ENCODE measurements at regions of chr12 and their contacts with region 1.

Region 1: DNA sequence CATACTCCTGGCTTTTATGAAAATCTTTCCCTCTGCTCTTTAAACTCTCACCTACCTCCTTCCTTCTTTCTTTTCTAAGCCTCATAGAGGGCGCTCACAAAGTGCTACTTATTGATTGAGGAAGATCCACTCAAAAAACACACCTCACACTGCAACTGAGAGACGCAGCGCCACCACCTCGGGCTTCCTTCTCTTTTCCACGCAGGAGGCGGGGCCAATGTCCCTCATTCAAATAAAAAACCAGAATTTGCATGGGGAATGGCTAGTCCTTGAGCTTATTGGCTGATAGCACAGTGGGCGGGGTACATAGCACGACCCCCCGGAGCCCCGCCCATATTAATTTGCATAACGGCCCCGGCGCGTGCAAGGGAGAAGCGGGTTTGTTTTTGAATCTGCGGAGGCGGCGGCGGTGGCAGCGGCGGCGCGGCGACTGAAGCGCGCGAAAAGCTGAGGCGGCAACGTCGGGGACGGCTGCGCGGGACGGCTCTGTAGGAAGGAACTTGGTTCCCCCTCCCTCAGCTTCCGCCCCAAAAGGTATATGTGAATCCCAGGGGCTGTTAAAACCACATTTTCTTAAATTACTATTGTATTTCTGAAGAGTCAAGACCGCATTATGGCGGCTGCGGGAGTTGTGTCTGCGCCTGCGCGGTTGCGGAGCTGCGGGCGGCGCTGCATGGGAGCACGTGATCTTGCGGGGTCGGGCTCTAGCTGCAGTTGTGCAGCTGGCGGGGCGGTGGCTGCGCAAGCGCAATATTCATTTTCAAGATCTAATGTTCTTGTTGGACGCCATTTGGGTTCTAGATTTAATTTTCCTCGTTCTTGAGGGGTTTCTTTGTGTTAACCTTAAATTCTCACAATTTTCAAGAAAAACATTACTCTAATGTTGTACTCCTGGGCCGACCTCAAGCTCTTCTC is at the start of gene ATF7IP:
- DNase-seq: peak; percentile 97
- ATAC-seq: peak; percentile 88
- H3K4me3 Mint-ChIP-seq: peak within 1 kb of the TSS; percentile 85
- H3K27ac Mint-ChIP-seq: peak within 1 kb of the TSS; percentile 97
- H3K4me1 Mint-ChIP-seq: peaks cover 19% of the 10 kb centered on the region
- H3K27me3 Mint-ChIP-seq: no peaks in the 10 kb centered on the region
- total RNA-seq, gene ATF7IP: 149 to 172 TPM

Region 2: GRCh38 chr12:14066051-14066450 is 299.5 kb before region 1 on chr12:
- POLR2A ChIA-PET with region 1: no interaction called
- DNase-seq: no peak
- ATAC-seq: no peak
- H3K4me3 Mint-ChIP-seq: no peak overlapping the region
- H3K27ac Mint-ChIP-seq: no peak overlapping the region
- H3K4me1 Mint-ChIP-seq: no peaks in the 10 kb centered on the region
- H3K27me3 Mint-ChIP-seq: peaks cover 3% of the 10 kb centered on the region

Region 3: DNA sequence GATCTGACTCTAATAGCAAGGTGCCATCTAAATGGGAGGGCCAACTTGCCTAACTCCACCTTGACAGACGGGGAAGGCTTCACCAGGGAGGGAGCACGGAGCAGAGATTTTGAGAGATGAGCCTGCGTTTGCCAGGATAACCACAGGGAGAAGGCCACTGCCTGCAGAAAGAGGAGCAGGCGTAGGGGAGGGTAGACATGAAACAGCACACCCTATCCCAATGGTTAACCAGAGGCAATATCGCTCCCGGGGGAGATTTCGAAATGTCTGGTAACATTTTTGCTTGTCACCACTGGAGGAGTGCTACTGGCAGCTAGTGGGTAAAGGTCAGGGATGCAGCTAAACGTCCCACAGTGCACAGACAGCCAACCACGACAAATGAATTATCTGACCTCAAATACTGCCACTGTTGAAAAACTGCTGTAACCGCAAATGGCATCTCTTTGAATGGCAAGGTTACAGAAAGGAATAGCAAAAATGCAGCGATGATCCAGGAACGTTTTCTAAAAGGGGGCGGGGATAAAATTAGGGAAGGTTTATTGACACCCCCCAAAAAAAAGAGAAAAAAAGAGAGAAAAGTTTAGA is 126.1 kb before region 1 on chr12:
- POLR2A ChIA-PET with region 1: interaction called, 18 read pairs
- DNase-seq: no peak
- ATAC-seq: peak; percentile 38
- H3K4me3 Mint-ChIP-seq: peak overlapping the region; percentile 58
- H3K27ac Mint-ChIP-seq: peak overlapping the region; percentile 83
- H3K4me1 Mint-ChIP-seq: peaks cover 20% of the 10 kb centered on the region
- H3K27me3 Mint-ChIP-seq: no peaks in the 10 kb centered on the region

Region 4: DNA sequence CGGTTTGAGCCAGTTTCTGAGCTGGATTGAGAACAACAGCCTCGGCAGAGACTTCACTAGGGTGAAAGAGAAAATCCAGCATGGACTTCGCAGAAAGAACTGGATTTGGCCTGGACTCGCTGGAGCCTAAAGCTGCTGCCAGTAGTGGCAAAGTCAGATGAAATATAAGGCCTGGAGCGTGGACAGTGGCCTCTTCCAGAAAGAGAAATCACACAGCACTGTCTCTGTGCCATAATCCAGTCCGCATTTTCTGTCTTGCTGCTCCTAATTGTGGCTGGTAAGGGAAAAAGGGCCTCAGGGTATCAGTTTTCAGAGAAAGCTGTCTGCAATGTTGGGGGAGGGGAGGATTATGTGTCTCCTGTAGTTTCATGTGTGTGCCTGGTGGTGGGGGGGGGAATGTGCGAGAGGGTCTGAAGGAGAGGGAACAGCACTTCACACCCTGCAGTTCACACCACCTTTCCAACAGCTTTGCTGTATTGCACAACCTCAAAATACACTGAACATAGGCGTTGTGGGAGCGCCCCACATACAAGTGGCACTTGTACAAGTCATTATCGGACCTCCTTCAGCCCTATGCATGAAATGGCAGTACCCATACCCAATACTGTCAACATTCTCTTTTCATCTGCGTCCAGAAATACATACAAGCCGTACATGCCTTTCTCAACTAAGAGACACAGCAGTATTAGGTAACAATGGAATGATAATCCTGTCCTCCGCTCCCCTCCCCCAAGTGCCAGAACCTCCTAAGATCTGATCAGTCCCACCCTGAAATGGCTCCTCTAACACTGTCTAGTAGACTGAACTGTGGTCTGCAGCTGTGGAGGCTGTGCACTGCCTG is 107.6 kb before region 1 on chr12:
- POLR2A ChIA-PET with region 1: interaction called, 32 read pairs
- DNase-seq: peak; percentile 74
- ATAC-seq: peak; percentile 82
- H3K4me3 Mint-ChIP-seq: peak overlapping the region; percentile 74
- H3K27ac Mint-ChIP-seq: peak overlapping the region; percentile 97
- H3K4me1 Mint-ChIP-seq: peaks cover 37% of the 10 kb centered on the region
- H3K27me3 Mint-ChIP-seq: no peaks in the 10 kb centered on the region

Region 5: GRCh38 chr12:14340371-14340770 is 25.2 kb before region 1 on chr12:
- POLR2A ChIA-PET with region 1: no interaction called
- DNase-seq: no peak
- ATAC-seq: no peak
- H3K4me3 Mint-ChIP-seq: no peak overlapping the region
- H3K27ac Mint-ChIP-seq: no peak overlapping the region
- H3K4me1 Mint-ChIP-seq: no peaks in the 10 kb centered on the region
- H3K27me3 Mint-ChIP-seq: no peaks in the 10 kb centered on the region

Region 6: DNA sequence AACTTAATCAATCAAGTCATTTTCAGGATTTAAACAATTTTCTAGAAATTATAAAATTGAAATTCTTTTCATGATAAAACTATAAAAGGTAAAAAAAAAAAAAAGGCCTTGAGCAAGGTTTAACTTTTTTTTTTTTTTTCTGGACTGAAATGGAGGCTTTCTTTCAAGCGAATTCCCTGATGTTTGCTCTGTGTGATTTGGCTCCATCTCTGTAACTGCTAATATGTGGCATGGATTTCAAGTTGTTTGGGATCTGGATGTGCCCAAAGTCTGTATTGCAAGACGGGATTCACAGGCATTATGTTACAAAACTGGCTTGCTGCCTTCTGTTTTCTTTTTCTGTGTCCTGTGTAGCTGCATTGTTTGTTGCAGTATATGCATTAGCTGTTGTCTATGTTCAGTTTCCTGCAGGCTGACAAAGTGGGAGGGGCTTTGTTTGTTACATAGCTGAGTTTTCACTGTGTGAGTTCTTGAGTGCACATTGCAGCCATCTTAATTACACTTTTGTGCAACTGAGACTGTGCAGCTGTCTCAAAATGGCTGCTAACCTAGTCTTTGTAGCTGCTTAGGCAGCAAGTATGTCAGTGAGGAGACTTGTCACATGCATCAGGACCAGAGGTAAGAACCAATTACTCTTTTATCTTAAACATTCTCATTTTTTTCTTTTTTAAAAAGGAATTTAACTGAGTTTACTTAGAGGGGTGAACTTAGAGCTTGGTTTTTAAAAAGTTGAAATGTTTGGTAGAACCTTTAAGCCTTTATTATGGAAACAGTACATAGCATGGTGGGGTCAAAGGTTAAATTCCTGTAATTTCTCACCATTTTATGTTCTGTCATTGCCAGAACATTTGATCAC is 19.5 kb after region 1 on chr12:
- POLR2A ChIA-PET with region 1: interaction called, 97 read pairs
- DNase-seq: no peak
- ATAC-seq: peak; percentile 96
- H3K4me3 Mint-ChIP-seq: peak overlapping the region; percentile 85
- H3K27ac Mint-ChIP-seq: peak overlapping the region; percentile 94
- H3K4me1 Mint-ChIP-seq: peaks cover 44% of the 10 kb centered on the region
- H3K27me3 Mint-ChIP-seq: no peaks in the 10 kb centered on the region

Region 7: GRCh38 chr12:14394317-14395073 is 28.9 kb after region 1 on chr12:
- POLR2A ChIA-PET with region 1: interaction called, 55 read pairs
- DNase-seq: no peak
- ATAC-seq: peak; percentile 76
- H3K4me3 Mint-ChIP-seq: peak overlapping the region; percentile 83
- H3K27ac Mint-ChIP-seq: peak overlapping the region; percentile 89
- H3K4me1 Mint-ChIP-seq: peaks cover 61% of the 10 kb centered on the region
- H3K27me3 Mint-ChIP-seq: no peaks in the 10 kb centered on the region

Region 8: GRCh38 chr12:14410841-14411569 is 45.5 kb after region 1 on chr12:
- POLR2A ChIA-PET with region 1: interaction called, 13 read pairs
- DNase-seq: no peak
- ATAC-seq: peak; percentile 70
- H3K4me3 Mint-ChIP-seq: peak overlapping the region; percentile 9
- H3K27ac Mint-ChIP-seq: peak overlapping the region; percentile 27
- H3K4me1 Mint-ChIP-seq: peaks cover 36% of the 10 kb centered on the region
- H3K27me3 Mint-ChIP-seq: no peaks in the 10 kb centered on the region

Region 9: DNA sequence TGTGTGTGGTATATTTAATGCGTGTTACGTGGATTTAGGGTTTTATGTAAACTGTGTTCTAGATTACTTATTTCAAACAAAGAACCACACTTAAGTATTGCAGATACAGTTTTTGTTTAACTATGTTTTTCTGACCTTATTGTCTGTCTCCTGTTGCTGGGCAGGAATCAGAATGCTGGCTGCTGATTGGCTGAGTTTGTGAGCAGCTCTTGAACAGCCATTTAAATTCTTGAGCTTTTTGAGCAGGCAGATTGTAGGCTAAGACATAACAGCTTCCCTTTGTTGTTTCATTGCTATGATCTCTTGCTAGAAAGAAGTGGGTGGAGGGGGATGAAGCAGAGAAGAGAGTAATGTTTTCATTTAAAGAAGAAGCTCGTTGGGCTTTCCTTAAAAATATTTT is 52.2 kb after region 1 on chr12:
- POLR2A ChIA-PET with region 1: interaction called, 38 read pairs
- DNase-seq: no peak
- ATAC-seq: peak; percentile 76
- H3K4me3 Mint-ChIP-seq: peak overlapping the region; percentile 86
- H3K27ac Mint-ChIP-seq: peak overlapping the region; percentile 95
- H3K4me1 Mint-ChIP-seq: peaks cover 32% of the 10 kb centered on the region
- H3K27me3 Mint-ChIP-seq: no peaks in the 10 kb centered on the region

Measured in activated naive CD8-positive, alpha-beta T cell treated with anti-CD3 and anti-CD28 coated beads, Interleukin-2, amount 10 ng/mL, durations not matched to agents 7 days and 5 days (primary cell).